B cell (primary cell): ENCODE measurements at regions of chr15 and their contacts with region 1.

Region 1: DNA sequence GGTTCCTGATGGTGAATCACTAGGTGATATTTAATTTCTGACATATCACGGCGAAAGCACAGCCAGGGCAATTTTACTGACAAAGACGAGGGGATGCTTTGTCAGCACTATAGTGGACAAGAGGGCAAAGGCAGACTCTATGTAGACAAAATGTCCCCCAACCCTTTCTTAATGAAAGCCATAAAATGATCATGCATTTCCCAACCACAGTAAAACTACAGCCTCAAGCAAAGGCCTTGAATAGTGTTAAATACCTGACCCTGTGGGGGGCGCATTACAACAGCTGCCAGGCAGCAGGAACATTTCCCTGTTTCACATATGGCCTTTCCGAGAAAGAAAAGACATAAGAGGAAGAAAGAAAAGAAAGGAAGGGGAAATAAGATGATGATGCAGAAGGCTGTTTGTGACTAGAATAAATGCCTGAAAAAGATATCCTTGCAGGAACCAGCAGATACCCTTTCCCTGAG is 49.5 kb downstream of the GLDN start:
- DNase-seq: no peak
- ATAC-seq: no peak
- H3K4me3 ChIP-seq: no peak overlapping the region
- H3K4me3 Mint-ChIP-seq: no peak overlapping the region
- H3K27ac ChIP-seq: no peak overlapping the region
- H3K27ac Mint-ChIP-seq: no peak overlapping the region
- H3K4me1 ChIP-seq: no peaks in the 10 kb centered on the region
- H3K4me1 Mint-ChIP-seq: no peaks in the 10 kb centered on the region
- H3K27me3 ChIP-seq: peaks cover 0 to 2% (median 0%) of the 10 kb centered on the region in 4 experiments
- H3K27me3 Mint-ChIP-seq: no peaks in the 10 kb centered on the region
- CTCF ChIP-seq: no peak

Region 2: DNA sequence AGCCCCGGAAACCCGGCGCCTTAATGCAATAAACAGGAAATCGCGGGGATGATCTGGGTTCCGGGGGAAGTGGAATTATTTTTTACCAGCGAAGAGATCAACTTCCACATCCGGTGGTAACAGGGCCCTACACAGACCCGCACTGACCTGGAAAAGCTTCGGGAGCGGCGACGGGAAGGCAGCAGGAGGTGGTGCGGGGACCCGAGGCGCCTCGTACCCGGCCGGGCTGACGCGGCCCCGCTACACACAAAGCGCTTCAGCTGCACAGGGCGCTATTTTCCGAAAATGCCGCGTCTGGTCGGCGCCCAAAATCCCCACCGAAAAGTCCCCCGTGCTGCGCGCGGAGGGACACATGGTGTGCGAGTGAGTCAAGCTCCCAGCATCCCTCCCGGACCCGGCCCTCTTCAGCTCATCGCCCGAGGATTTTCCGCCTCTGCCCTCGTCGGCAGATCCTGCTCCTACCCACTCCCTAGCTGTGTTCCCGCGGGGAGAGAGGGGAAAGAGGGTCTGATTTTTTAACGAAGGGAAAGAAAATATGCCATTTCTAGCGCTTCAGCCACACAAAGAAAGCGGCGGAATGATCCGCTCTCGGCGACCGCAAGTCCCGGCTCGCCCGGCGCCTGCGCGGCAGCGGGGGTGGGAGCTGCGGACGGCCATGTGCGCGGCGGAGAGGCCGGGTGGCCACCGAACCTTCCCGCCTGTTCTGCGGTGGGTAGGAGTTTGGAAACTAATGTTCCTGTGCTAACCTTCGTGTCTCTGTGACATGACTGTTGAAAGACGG is 1036.0 kb before region 1 on chr15 and contains the start of gene GABPB1:
- CTCF ChIA-PET with region 1: no interaction called
- POLR2A ChIA-PET with region 1: no interaction called
- intact Hi-C with region 1: no loop called
- DNase-seq: peak; percentile 99
- ATAC-seq: peak; percentile 58
- H3K4me3 ChIP-seq: peak within 1 kb of the TSS; percentile 71 to 91 (median 82)
- H3K4me3 Mint-ChIP-seq: peak within 1 kb of the TSS; percentile 95
- H3K27ac ChIP-seq: peak within 1 kb of the TSS; percentile 98 to 99
- H3K27ac Mint-ChIP-seq: peak within 1 kb of the TSS; percentile 98
- H3K4me1 ChIP-seq: peaks cover 44 to 52% of the 10 kb centered on the region in 2 donors
- H3K4me1 Mint-ChIP-seq: peaks cover 60% of the 10 kb centered on the region
- H3K27me3 ChIP-seq: no peaks in the 10 kb centered on the region
- H3K27me3 Mint-ChIP-seq: no peaks in the 10 kb centered on the region
- CTCF ChIP-seq: no peak
- total RNA-seq, gene GABPB1: 37.1 and 37.3 TPM in 2 replicates

Region 3: GRCh38 chr15:51267703-51268083 is 123.3 kb before region 1 on chr15:
- CTCF ChIA-PET with region 1: no interaction called
- POLR2A ChIA-PET with region 1: no interaction called
- intact Hi-C with region 1: no loop called
- DNase-seq: peak; percentile 10
- ATAC-seq: no peak
- H3K4me3 ChIP-seq: peak overlapping the region in 4 of 5 experiments; percentile 7 to 41 (median 22)
- H3K4me3 Mint-ChIP-seq: peak overlapping the region; percentile 32
- H3K27ac ChIP-seq: no peak overlapping the region
- H3K27ac Mint-ChIP-seq: no peak overlapping the region
- H3K4me1 ChIP-seq: peaks cover 12 to 14% of the 10 kb centered on the region in 2 donors
- H3K4me1 Mint-ChIP-seq: peaks cover 7% of the 10 kb centered on the region
- H3K27me3 ChIP-seq: peaks cover 0 to 35% (median 17%) of the 10 kb centered on the region in 4 experiments
- H3K27me3 Mint-ChIP-seq: peaks cover 31% of the 10 kb centered on the region
- CTCF ChIP-seq: no peak

Region 4: DNA sequence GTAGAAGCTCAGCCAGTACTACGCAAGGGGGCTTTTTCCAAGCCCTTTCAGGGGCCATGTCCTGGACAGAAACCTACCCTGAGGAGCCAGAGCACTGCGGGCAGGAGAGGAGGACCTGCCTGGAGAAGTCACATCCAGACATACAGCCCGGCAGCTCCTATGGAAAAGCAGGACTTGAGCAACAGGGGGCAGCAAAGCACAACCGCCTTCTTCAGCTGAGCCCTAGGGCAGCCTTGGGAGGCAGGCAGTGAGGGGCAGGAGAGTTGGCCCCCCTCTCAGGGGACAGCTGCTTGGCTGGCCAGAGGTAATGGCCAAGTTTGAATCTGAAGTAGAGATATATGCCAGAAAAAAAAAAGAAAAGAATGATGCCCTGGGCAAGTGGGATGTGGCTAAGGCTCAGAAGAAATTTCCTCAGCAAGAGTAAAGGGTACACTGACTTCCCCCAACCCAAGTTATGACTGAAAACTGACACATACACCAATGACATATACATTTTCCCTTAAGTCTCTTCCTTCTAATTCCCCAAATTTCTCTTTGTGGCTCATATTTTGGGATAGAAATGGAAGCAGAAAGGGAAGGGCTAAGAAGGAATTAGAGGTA is 109.5 kb before region 1 on chr15:
- CTCF ChIA-PET with region 1: no interaction called
- POLR2A ChIA-PET with region 1: no interaction called
- intact Hi-C with region 1: loop called (anchors 10 kb)
- DNase-seq: peak; percentile 24
- ATAC-seq: no peak
- H3K4me3 ChIP-seq: no peak overlapping the region
- H3K4me3 Mint-ChIP-seq: no peak overlapping the region
- H3K27ac ChIP-seq: no peak overlapping the region
- H3K27ac Mint-ChIP-seq: no peak overlapping the region
- H3K4me1 ChIP-seq: peaks cover 8 to 14% of the 10 kb centered on the region in 2 donors
- H3K4me1 Mint-ChIP-seq: peaks cover 14% of the 10 kb centered on the region
- H3K27me3 ChIP-seq: peaks cover 0 to 7% (median 3%) of the 10 kb centered on the region in 4 experiments
- H3K27me3 Mint-ChIP-seq: peaks cover 16% of the 10 kb centered on the region
- CTCF ChIP-seq: no peak

Region 5: GRCh38 chr15:51401872-51402517 is 11.0 kb after region 1 on chr15:
- CTCF ChIA-PET with region 1: no interaction called
- POLR2A ChIA-PET with region 1: no interaction called
- intact Hi-C with region 1: no loop called
- DNase-seq: peak; percentile 22
- ATAC-seq: no peak
- H3K4me3 ChIP-seq: no peak overlapping the region
- H3K4me3 Mint-ChIP-seq: no peak overlapping the region
- H3K27ac ChIP-seq: no peak overlapping the region
- H3K27ac Mint-ChIP-seq: no peak overlapping the region
- H3K4me1 ChIP-seq: no peaks in the 10 kb centered on the region
- H3K4me1 Mint-ChIP-seq: no peaks in the 10 kb centered on the region
- H3K27me3 ChIP-seq: peaks cover 0 to 12% (median 0%) of the 10 kb centered on the region in 4 experiments
- H3K27me3 Mint-ChIP-seq: peaks cover 29% of the 10 kb centered on the region
- CTCF ChIP-seq: peak; percentile 7